ENCODE measurements at regions of chr10 and their contacts with region 1.

Region 1: GRCh38 chr10:70221030-70221429 is 12.2 kb downstream of the PPA1 start:
- DNase-seq: no peak
- ATAC-seq: no peak
- H3K4me3 ChIP-seq: no peak overlapping the region
- H3K27ac ChIP-seq: no peak overlapping the region
- H3K4me1 ChIP-seq: peaks cover 1% of the 10 kb centered on the region; the same call in 1 of the 2 replicates
- H3K27me3 ChIP-seq: no peaks in the 10 kb centered on the region
- CTCF ChIP-seq: no peak
- POLR2A ChIP-seq: no peak
- RAD21 ChIP-seq: no peak

Region 2: GRCh38 chr10:70331486-70332268 is 110.6 kb after region 1 on chr10:
- CTCF ChIA-PET with region 1: no interaction called
- POLR2A ChIA-PET with region 1: no interaction called
- dilution Hi-C with region 1: no loop called
- in situ Hi-C with region 1: no loop called
- intact Hi-C with region 1: loop called (anchors 1 kb)
- DNase-seq: peak; percentile 93
- ATAC-seq: peak; percentile 81
- H3K4me3 ChIP-seq: no peak overlapping the region
- H3K27ac ChIP-seq: no peak overlapping the region
- H3K4me1 ChIP-seq: peaks cover 9% of the 10 kb centered on the region
- H3K27me3 ChIP-seq: no peaks in the 10 kb centered on the region
- CTCF ChIP-seq: peak; percentile 42
- POLR2A ChIP-seq: no peak
- RAD21 ChIP-seq: peak; percentile 42; the same call in 1 of the 2 replicates

Region 3: GRCh38 chr10:70540089-70540788 is 319.2 kb after region 1 on chr10:
- CTCF ChIA-PET with region 1: interaction called, 3 read pairs
- POLR2A ChIA-PET with region 1: interaction called, 4 read pairs
- dilution Hi-C with region 1: no loop called
- in situ Hi-C with region 1: no loop called
- intact Hi-C with region 1: loop called (anchors 5 kb)
- DNase-seq: no peak
- ATAC-seq: peak; percentile 68
- H3K4me3 ChIP-seq: no peak overlapping the region
- H3K27ac ChIP-seq: no peak overlapping the region
- H3K4me1 ChIP-seq: no peaks in the 10 kb centered on the region
- H3K27me3 ChIP-seq: peaks cover 29% of the 10 kb centered on the region
- CTCF ChIP-seq: peak; percentile 56
- POLR2A ChIP-seq: no peak
- RAD21 ChIP-seq: peak; percentile 66